Right lobe of liver (tissue), 6 donors: ENCODE measurements at regions of chr7 and their contacts with region 1.

Region 1: DNA sequence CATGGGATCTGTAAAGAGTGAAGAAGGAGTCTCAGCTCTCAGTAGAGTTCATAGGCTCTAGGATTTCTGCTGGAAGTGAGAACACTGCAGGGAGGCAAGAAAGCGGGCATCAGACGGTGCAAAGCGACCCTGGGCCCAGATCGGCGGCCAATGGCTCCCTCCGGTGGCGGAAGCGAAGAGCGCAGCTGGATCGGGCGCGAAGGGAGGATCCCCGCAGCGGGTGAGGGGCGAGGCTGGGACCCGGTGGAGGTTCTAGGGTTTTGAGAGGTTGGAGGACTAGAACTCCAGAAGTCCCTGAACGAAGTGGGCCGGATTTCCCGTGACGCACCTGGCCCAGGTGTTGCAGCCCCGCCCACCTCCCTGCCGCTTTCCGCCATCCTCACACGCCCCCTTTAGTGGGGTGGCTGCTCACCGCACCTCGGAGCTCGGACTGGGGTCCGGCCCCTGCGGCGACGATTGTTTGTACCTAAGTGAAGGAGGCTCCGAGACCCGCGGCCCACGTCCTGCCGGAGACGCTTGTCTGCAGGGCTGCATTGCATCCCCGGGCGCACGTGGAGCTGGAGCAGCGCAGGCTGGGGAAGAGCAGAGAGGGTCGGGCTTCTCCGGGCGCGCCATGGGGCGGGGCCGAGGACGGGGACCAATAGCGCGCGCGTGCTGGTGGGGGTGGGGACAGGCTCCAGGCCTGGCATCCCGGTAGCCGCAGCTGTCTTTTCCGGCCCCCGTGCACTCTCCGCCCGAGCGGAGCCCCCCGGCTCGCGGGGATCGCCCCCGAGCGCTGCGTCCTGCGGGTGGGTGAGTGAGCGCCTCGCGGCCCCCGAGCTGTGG is at the start of gene SLC12A9:
- DNase-seq: peak; percentile 93 to 95 (median 93)
- ATAC-seq: peak; percentile 98 to 99 (median 99)
- H3K4me3 ChIP-seq: peak within 1 kb of the TSS; percentile 61 to 71 (median 65)
- H3K27ac ChIP-seq: peak within 1 kb of the TSS in 1 of 3 donors; percentile 14
- H3K4me1 ChIP-seq: peaks cover 0 to 7% (median 0%) of the 10 kb centered on the region in 4 donors
- H3K27me3 ChIP-seq: no peaks in the 10 kb centered on the region
- CTCF ChIP-seq: peak; percentile 96 to 97 (median 96)
- POLR2A ChIP-seq: peak; percentile 51
- total RNA-seq, gene SLC12A9: 7.1 to 10.6 (median 9.2) TPM

Region 2: DNA sequence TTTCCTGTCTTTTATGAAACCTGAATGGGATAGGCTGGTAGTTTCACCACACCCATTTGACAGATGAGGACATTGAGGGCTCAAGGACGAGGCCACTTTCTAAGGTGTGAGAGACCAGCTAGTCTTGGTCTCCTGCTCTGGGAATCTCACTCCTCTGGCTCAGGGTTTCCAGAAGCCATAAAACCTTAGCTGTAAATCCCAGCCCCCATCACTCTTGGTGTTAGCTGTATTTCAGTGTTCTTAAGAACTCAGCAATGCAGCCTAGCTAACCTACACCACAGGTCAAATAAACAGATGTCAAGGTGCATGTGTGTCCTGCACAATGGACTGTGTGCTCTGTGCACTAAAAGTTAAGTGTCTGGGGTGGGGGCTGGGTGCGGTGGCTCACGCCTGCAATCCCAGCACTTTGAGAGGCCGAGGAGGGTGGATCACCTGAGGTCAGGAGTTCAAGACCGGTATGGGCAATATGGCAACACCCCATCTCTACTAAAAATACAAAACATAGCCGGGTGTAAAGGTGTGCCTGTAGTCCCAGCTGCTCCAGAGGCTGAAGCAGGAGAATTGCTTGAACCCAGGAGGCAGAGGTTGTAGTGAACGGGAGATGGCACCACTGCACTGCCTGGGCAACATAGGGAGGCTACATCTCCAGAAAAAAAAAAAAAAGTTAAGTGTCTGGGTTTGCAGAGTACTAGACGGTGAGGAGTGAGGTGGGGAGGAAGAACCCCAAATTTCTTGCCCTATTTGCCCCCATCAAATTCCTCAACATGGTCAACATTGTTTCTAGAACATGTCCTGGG is 132.5 kb before region 1 on chr7:
- intact Hi-C with region 1: loop called in 1 of 2 experiments (anchors 10 kb)
- DNase-seq: no peak
- ATAC-seq: peak in 2 of 4 donors; percentile 4 to 20
- H3K4me3 ChIP-seq: peak overlapping the region in 2 of 3 donors; percentile 48 to 60
- H3K27ac ChIP-seq: no peak overlapping the region
- H3K4me1 ChIP-seq: peaks cover 0 to 47% (median 15%) of the 10 kb centered on the region in 4 donors
- H3K27me3 ChIP-seq: no peaks in the 10 kb centered on the region
- CTCF ChIP-seq: peak in 2 of 4 donors; percentile 23 to 28
- POLR2A ChIP-seq: no peak

Region 3: DNA sequence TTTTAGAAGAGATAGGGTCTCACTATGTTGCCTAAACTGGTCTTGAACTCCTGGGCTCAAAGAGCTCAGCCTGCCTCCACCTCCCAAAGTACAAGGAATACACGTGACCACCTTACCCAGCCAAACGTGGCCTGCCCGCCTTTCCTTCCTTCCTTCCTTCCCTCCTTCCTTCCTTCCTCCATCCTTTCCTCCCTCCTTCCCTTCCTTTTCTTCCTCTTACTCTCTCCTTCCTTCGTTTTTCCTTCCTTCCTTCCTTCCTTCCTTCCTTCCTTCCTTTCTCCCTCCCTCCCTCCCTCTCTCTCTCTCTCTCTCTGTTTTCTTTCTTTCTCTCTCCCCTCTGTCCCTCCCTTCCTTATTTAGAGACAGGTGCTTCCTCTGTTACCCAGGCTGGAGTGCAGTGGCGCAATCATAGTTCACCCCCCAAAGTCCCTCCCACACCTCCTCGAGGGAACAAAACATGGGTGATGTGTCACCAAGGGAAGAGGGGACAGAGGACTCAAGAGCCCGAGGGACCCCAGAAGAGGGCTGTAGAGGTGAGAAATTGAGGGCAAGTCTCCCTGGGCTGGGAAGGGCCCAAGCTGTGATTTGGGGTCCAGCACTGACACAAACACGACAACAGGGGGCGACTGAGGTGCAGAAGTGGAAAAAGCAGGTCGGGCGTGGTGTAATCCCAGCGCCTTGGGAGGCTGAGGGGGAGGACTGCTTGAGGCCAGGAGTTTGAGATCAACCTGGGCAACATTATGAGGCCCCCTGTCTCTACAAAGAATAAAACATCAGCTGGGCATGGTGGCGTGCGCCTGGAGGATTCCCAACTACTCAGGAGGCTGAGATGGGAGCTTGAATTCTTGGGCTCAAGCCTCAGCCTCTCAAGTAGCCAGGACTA is 53.0 kb before region 1 on chr7:
- intact Hi-C with region 1: loop called (anchors 5 kb)
- DNase-seq: peak in 2 of 3 donors; percentile 59 to 63
- ATAC-seq: peak; percentile 73 to 75 (median 74)
- H3K4me3 ChIP-seq: no peak overlapping the region
- H3K27ac ChIP-seq: no peak overlapping the region
- H3K4me1 ChIP-seq: peaks cover 0 to 4% (median 0%) of the 10 kb centered on the region in 4 donors
- H3K27me3 ChIP-seq: no peaks in the 10 kb centered on the region
- CTCF ChIP-seq: peak; percentile 60 to 78 (median 70)
- POLR2A ChIP-seq: no peak